ENCODE measurements at regions of chr3 and their contacts with region 1.

Region 1: DNA sequence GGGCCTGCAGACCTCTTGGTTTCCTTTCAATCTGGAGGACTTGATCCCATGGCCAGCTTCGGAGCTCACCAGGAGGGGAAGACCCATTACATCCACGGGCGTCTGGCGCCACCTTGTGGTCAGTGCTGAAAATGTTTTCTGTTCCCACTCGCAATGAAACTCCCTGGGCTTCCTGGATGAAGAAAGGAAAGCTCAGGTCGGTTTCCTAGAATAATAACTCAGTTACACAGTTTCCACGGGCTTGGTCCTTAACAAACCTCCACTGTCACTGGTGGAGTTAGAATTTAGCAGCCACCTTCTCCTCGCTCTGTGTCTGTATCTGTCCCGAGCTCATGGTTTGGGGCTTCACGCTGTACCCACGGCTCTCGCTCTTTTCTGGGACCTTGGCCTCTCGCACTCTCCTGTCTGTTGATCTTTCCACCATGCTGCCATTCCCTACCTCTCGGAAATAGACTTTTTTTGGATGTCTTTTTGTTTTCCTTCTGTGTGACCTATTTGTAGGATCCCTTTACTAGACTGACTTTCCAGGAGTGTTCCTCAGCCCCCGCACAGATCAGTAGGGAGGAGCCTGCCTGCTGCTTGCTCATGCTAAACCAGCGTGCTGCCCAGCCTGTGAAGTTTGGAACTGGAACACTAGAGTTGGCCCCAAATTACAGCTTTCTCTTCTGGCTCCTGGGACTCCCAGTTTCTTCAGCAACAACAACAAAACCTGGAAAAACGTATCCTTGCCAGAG is 56.3 kb downstream of the IL20RB start:
- H3K4me3 Mint-ChIP-seq: peak overlapping the region; percentile 77
- H3K27ac Mint-ChIP-seq: peak overlapping the region; percentile 65
- H3K4me1 Mint-ChIP-seq: peaks cover 13% of the 10 kb centered on the region
- H3K27me3 Mint-ChIP-seq: peaks cover 2% of the 10 kb centered on the region

Region 2: DNA sequence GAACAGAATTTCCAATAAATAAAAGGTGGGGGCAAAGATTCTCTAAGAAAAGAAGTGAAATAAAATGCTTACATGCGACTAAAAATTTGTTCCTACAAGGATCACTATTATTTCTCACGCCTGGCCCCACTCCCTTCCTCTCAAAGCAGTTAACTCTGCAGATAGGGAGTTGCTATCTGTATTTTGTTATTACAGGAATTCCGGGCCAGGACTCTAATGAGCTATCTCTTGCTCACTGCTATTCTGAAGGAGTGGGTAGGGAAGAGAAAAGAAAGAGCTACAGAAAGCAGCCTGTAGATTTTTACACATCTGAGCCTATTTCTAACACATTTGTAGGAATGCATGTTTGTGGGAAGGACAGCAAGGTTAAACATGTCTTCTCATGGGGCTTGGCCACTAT is 623.5 kb before region 1 on chr3:
- intact Hi-C with region 1: loop called (anchors 2 kb)
- H3K4me3 Mint-ChIP-seq: no peak overlapping the region
- H3K27ac Mint-ChIP-seq: no peak overlapping the region
- H3K4me1 Mint-ChIP-seq: no peaks in the 10 kb centered on the region
- H3K27me3 Mint-ChIP-seq: no peaks in the 10 kb centered on the region

Region 3: GRCh38 chr3:136545664-136546268 is 468.4 kb before region 1 on chr3:
- intact Hi-C with region 1: loop called (anchors 10 kb)
- H3K4me3 Mint-ChIP-seq: no peak overlapping the region
- H3K27ac Mint-ChIP-seq: no peak overlapping the region
- H3K4me1 Mint-ChIP-seq: peaks cover 52% of the 10 kb centered on the region
- H3K27me3 Mint-ChIP-seq: no peaks in the 10 kb centered on the region

Region 4: GRCh38 chr3:136949708-136950107 is 64.4 kb before region 1 on chr3:
- intact Hi-C with region 1: loop called (anchors 5 kb)
- H3K4me3 Mint-ChIP-seq: no peak overlapping the region
- H3K27ac Mint-ChIP-seq: no peak overlapping the region
- H3K4me1 Mint-ChIP-seq: peaks cover 55% of the 10 kb centered on the region
- H3K27me3 Mint-ChIP-seq: no peaks in the 10 kb centered on the region

Region 5: GRCh38 chr3:136984837-136985236 is 29.3 kb before region 1 on chr3:
- intact Hi-C with region 1: no loop called
- H3K4me3 Mint-ChIP-seq: no peak overlapping the region
- H3K27ac Mint-ChIP-seq: no peak overlapping the region
- H3K4me1 Mint-ChIP-seq: no peaks in the 10 kb centered on the region
- H3K27me3 Mint-ChIP-seq: no peaks in the 10 kb centered on the region